ENCODE measurements at regions of chr4 and their contacts with region 1.

Region 1: DNA sequence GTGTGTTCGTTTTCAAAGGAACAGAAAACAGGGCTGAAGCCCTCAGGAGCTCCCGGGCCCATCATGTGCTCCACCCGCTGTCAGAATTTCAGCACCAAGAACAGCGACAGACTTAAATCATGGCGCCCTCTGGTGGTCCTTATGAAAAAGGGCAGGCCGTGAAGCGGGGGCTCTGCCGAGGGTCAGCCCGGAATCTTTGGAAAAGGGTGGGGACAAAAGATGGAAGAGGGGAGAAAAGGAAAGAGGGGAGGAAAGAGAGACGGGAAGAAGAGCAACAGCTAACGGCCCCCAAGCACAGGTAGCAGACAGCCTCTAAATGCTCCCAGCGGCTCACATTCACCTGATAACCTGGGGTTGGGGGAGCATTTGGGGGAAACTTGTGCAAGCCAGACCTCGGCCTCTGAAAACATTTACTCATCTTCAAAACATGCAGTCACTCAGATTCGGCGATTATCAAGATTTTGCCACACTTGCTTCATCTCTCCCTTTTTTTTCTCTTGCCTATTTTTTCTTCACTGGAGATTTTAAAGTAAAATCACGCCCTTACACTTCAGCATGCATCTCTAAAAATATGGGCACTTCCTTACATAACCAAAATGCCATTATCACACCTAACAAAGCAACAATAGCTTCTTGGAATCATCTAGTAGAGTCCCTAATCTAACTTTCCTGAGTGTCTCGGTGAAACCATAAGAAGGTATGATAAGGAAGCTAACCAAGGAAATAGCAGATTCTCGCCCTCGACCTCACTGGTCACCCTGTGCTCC is 28.1 kb upstream of the MAN2B2 start:
- DNase-seq: no peak
- H3K4me3 ChIP-seq: no peak overlapping the region
- CTCF ChIP-seq: peak in 1 of 3 donors; percentile 56
- POLR2A ChIP-seq: no peak

Region 2: GRCh38 chr4:6250235-6250983 is 296.5 kb before region 1 on chr4:
- intact Hi-C with region 1: loop called (anchors 10 kb)
- DNase-seq: no peak
- H3K4me3 ChIP-seq: no peak overlapping the region
- CTCF ChIP-seq: peak in 1 of 3 donors; percentile 35
- POLR2A ChIP-seq: no peak

Region 3: GRCh38 chr4:6338175-6338950 is 208.5 kb before region 1 on chr4:
- intact Hi-C with region 1: loop called (anchors 5 kb)
- DNase-seq: no peak
- H3K4me3 ChIP-seq: no peak overlapping the region
- CTCF ChIP-seq: no peak
- POLR2A ChIP-seq: no peak

Region 4: GRCh38 chr4:6633041-6633906 is 86.4 kb after region 1 on chr4:
- intact Hi-C with region 1: no loop called
- DNase-seq: peak in 1 of 2 donors; percentile 73
- H3K4me3 ChIP-seq: no peak overlapping the region
- CTCF ChIP-seq: no peak
- POLR2A ChIP-seq: no peak

Region 5: GRCh38 chr4:6855692-6856297 is 308.9 kb after region 1 on chr4:
- intact Hi-C with region 1: no loop called
- DNase-seq: no peak
- H3K4me3 ChIP-seq: no peak overlapping the region
- CTCF ChIP-seq: no peak
- POLR2A ChIP-seq: no peak

Region 6: DNA sequence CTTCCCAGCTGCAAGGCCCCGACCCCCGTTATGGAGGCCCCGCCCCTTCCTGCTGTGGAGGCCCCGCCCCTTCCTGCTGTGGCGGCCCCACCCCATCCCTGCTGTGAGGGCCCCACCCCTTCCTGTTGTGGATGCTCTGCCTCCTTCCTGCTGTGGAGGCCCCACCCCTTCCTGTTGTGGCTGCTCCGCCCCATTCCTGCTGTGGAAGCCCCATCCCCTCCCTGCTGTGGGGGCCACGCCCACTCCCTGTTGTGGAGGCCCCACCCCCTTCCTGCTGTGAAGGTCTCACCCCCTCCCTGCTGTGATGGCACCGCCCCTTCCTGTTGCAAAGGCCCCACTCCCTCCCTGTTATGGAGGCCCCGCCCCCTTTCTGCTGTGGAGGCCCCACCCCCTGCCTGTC is 992.8 kb after region 1 on chr4:
- intact Hi-C with region 1: no loop called
- DNase-seq: no peak
- H3K4me3 ChIP-seq: no peak overlapping the region
- CTCF ChIP-seq: no peak
- POLR2A ChIP-seq: no peak